ENCODE measurements at regions of chr19 and their contacts with region 1.

Region 1: DNA sequence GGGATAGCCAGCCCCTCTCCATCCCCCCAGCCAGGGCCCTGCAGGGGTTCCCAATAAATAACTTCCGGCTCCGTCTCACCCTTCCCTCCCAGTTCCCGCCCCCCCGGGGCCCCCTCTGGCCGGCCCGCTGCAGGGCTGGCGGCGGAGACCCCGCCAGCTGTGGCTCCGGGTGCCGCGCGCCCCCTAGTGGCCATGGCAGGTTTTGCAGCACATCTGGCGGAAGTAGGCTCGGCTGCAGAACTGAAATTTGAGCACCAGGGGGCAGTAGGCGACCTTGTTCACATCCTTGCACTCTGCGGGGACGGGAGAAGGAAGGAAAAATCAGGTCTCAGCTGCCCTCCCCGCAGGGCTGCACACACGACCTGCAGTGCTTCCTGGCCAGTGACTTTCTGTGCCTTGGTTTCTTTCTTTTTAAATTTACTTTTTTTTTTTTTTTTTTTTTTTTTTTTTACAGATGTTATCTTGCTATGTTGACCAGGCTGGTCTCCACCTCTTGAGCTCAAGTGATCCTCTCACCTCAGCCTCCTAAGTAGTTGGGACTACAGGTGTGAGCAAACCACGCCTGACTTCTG is 3.6 kb upstream of the MYO1F start:
- DNase-seq: peak; percentile 78 to 94 (median 86)
- ATAC-seq: peak; percentile 69
- H3K4me3 ChIP-seq: no peak overlapping the region
- H3K4me3 Mint-ChIP-seq: no peak overlapping the region
- H3K27ac ChIP-seq: no peak overlapping the region
- H3K27ac Mint-ChIP-seq: no peak overlapping the region
- H3K4me1 ChIP-seq: peaks cover 54% of the 10 kb centered on the region
- H3K4me1 Mint-ChIP-seq: peaks cover 30% of the 10 kb centered on the region
- H3K27me3 ChIP-seq: no peaks in the 10 kb centered on the region
- H3K27me3 Mint-ChIP-seq: no peaks in the 10 kb centered on the region
- CTCF ChIP-seq: peak; percentile 100

Region 2: DNA sequence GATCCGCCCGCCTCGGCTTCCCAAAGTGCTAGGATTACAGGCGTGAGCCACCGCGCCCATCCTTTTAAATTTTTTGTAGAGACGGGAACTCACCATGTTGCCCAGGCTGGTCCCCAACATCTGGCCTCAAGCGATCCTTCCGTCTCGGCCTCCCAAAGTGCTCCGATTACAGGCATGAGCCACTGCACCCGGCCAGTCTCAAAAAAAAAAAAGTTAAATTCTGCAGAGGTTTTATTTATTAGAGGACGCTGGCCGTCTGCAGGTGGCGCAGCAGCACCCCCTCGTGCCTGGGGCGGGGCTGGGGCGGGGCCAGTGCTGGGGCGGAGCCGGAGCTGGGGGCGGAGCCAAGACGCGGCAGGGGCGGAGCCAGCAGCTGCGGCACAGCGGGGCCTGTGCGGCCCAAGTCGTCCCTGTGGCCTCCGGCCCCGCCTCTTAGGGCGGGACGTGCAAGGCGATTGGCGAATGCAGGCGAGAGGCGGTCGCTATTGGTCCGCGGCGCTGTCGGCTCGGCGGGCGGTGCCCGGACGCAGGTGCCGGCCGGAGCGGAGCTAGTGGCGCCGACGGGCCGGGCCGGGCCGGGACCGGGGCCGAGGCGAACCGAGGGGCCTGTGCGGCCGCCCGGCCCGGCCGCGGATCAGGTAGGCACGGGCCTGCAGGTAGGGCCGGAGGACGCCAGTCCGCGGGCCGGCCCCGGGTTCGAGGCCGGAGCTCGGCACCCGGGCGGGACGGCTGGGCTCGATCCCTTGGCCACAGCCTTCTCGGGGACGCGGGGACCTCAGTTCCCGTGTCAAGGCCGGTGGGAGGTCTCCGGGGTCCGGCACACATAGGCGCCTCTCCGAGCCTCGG is 167.8 kb before region 1 on chr19 and contains the start of gene MARCHF2:
- CTCF ChIA-PET with region 1: interaction called, 13 read pairs
- POLR2A ChIA-PET with region 1: interaction called, 6 read pairs
- intact Hi-C with region 1: loop called (anchors 2 to 5 kb)
- DNase-seq: peak; percentile 91 to 99 (median 96)
- ATAC-seq: peak; percentile 99
- H3K4me3 ChIP-seq: peak within 1 kb of the TSS; percentile 62
- H3K4me3 Mint-ChIP-seq: peak within 1 kb of the TSS; percentile 81
- H3K27ac ChIP-seq: no peak within 1 kb of the TSS
- H3K27ac Mint-ChIP-seq: no peak within 1 kb of the TSS
- H3K4me1 ChIP-seq: peaks cover 15% of the 10 kb centered on the region
- H3K4me1 Mint-ChIP-seq: peaks cover 13% of the 10 kb centered on the region
- H3K27me3 ChIP-seq: no peaks in the 10 kb centered on the region
- H3K27me3 Mint-ChIP-seq: no peaks in the 10 kb centered on the region
- CTCF ChIP-seq: peak; percentile 75
- total RNA-seq, gene MARCHF2: 20.0 to 22.2 TPM

Region 3: DNA sequence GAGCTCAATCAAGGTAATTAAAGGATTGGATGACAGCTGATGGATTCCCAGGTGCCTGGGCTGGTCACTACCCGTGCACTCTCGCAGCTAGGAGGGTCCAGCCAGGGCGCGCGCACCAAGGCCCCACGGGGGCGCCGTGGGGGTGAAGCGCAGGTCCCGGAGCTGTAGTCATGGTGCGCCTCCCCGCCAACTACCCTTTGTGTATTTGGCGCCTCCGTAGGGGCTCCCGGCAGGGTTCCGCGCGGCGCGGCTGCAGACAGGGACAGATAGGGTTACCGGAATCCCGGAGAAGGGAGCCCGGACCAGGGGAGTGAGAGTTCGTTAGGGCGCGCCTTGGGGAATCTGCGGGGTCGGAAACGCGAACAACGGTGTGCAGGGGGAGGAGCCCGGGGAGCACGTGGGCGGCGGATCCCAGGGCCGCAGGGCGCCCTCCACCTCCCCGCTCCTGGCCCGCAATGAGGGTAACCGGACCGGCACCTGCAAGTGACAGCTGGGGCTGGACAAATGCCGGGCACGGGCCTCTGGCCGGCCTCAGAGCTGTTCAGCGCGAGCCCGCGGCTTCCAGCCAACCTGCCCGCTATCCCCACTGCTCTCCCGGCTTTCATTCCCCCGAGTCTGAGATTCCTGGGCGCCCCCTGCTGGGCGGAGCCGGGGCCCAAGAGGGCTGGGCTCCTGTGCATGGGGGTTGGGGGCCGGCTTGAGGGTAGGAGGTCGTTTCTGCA is 75.0 kb before region 1 on chr19:
- CTCF ChIA-PET with region 1: interaction called, 10 read pairs
- POLR2A ChIA-PET with region 1: interaction called, 9 read pairs
- intact Hi-C with region 1: loop called in 1 of 2 experiments (anchors 5 kb)
- DNase-seq: peak; percentile 47 to 86 (median 67)
- ATAC-seq: peak; percentile 77
- H3K4me3 ChIP-seq: peak overlapping the region; percentile 75
- H3K4me3 Mint-ChIP-seq: peak overlapping the region; percentile 93
- H3K27ac ChIP-seq: peak overlapping the region; percentile 5 to 46
- H3K27ac Mint-ChIP-seq: peak overlapping the region; percentile 85
- H3K4me1 ChIP-seq: peaks cover 40% of the 10 kb centered on the region
- H3K4me1 Mint-ChIP-seq: peaks cover 22% of the 10 kb centered on the region
- H3K27me3 ChIP-seq: no peaks in the 10 kb centered on the region
- H3K27me3 Mint-ChIP-seq: no peaks in the 10 kb centered on the region
- CTCF ChIP-seq: peak; percentile 73

Region 4: GRCh38 chr19:8557642-8558238 is 23.1 kb before region 1 on chr19:
- CTCF ChIA-PET with region 1: interaction called, 11 read pairs
- POLR2A ChIA-PET with region 1: interaction called, 3 read pairs
- intact Hi-C with region 1: no loop called
- DNase-seq: peak in 1 of 14 experiments; percentile 9
- ATAC-seq: no peak
- H3K4me3 ChIP-seq: no peak overlapping the region
- H3K4me3 Mint-ChIP-seq: no peak overlapping the region
- H3K27ac ChIP-seq: no peak overlapping the region
- H3K27ac Mint-ChIP-seq: peak overlapping the region; percentile 66
- H3K4me1 ChIP-seq: peaks cover 39% of the 10 kb centered on the region
- H3K4me1 Mint-ChIP-seq: peaks cover 13% of the 10 kb centered on the region
- H3K27me3 ChIP-seq: no peaks in the 10 kb centered on the region
- H3K27me3 Mint-ChIP-seq: no peaks in the 10 kb centered on the region
- CTCF ChIP-seq: no peak

Region 5: DNA sequence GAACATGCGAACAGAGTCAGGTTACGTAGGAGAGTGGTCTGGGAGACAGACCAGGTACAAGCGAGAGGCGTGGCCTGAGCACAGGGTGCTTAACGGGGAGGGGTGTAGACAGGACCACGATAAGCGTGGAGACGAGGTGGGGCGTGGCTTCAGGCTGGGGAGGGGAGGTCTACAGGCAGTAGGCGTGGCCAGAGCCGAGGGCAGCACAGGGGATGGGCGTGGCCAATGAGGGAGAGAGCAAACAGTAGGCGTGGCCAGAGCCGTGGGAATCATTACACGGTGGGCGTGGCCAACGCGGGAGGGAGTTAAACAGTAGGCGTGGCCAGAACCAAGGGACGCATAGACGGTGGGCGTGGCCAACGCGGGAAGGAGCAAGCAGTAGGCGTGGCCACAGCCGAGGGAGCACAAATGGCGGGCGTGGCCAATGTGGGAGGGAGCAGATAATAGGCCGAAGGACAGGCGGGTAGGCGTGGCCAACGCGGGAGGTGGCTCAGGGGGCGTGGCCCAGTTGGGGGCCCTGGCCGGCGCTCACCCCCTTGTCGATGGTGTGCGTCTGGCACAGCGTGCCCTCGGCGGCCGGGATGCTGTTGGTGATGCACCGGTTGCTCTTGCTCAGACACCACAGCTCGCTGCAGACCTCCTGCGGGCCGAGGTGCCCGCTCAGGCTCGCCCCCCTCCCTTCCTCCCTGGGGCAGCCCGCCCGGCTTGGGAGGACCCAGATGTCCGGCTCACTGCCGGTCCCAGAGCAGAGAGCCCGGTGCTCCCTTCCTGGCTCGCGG is 11.6 kb after region 1 on chr19:
- CTCF ChIA-PET with region 1: interaction called, 20 read pairs
- POLR2A ChIA-PET with region 1: interaction called, 3 read pairs
- intact Hi-C with region 1: no loop called
- DNase-seq: peak; percentile 91 to 99 (median 95)
- ATAC-seq: peak; percentile 87
- H3K4me3 ChIP-seq: peak overlapping the region; percentile 58
- H3K4me3 Mint-ChIP-seq: peak overlapping the region; percentile 83
- H3K27ac ChIP-seq: no peak overlapping the region
- H3K27ac Mint-ChIP-seq: peak overlapping the region; percentile 63
- H3K4me1 ChIP-seq: peaks cover 20% of the 10 kb centered on the region
- H3K4me1 Mint-ChIP-seq: peaks cover 20% of the 10 kb centered on the region
- H3K27me3 ChIP-seq: no peaks in the 10 kb centered on the region
- H3K27me3 Mint-ChIP-seq: no peaks in the 10 kb centered on the region
- CTCF ChIP-seq: no peak

Region 6: GRCh38 chr19:8615813-8616596 is 35.2 kb after region 1 on chr19:
- CTCF ChIA-PET with region 1: interaction called, 18 read pairs
- POLR2A ChIA-PET with region 1: no interaction called
- intact Hi-C with region 1: loop called (anchors 5 kb)
- DNase-seq: peak; percentile 42 to 81 (median 54)
- ATAC-seq: peak; percentile 58
- H3K4me3 ChIP-seq: no peak overlapping the region
- H3K4me3 Mint-ChIP-seq: no peak overlapping the region
- H3K27ac ChIP-seq: no peak overlapping the region
- H3K27ac Mint-ChIP-seq: no peak overlapping the region
- H3K4me1 ChIP-seq: peaks cover 23% of the 10 kb centered on the region
- H3K4me1 Mint-ChIP-seq: peaks cover 28% of the 10 kb centered on the region
- H3K27me3 ChIP-seq: no peaks in the 10 kb centered on the region
- H3K27me3 Mint-ChIP-seq: peaks cover 7% of the 10 kb centered on the region
- CTCF ChIP-seq: peak; percentile 93

Region 7: DNA sequence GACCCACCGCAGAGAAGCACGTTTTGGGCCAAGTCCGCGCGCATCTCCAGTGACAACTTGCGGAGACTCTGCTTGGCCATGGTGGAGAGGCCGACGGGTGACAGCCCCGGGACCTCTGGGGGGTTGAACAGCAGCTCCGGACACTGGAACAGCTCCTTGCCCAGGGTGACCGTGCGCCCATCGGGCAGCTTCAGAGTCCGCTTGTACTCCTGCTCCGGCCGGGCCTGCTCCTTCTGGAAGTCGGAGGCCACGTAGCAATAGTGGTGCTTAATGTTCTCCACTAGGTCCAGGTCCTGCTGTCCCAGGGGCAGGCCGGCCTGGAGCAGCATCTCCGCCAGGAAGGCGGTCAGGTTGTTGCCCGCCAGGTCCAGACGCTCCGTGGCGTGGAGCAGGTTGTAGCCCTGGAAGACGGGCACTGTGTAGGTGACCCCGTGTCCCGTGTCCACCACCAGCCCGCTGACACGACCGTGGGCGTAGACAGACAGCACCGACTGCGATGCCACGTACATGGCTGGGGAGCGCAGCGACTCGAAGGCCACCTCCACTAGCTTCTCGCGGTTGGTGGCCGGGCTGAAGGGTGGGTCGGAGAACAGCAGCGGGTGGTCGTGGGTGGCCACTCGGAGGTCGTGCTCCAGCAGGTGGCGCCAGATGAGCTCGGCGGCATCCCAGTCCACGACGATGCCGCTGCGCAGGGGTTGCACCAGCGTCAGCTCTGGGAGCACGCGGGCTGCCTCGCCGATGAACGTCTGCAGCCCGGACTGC is 117.1 kb after region 1 on chr19:
- CTCF ChIA-PET with region 1: interaction called, 5 read pairs
- POLR2A ChIA-PET with region 1: no interaction called
- intact Hi-C with region 1: loop called (anchors 1 to 2 kb)
- DNase-seq: peak in 4 of 14 experiments; percentile 10 to 36 (median 18)
- ATAC-seq: no peak
- H3K4me3 ChIP-seq: no peak overlapping the region
- H3K4me3 Mint-ChIP-seq: no peak overlapping the region
- H3K27ac ChIP-seq: no peak overlapping the region
- H3K27ac Mint-ChIP-seq: no peak overlapping the region
- H3K4me1 ChIP-seq: peaks cover 50% of the 10 kb centered on the region
- H3K4me1 Mint-ChIP-seq: peaks cover 36% of the 10 kb centered on the region
- H3K27me3 ChIP-seq: no peaks in the 10 kb centered on the region
- H3K27me3 Mint-ChIP-seq: peaks cover 12% of the 10 kb centered on the region
- CTCF ChIP-seq: no peak